A549 (cell line): ENCODE measurements at regions of chr17 and their contacts with region 1.

Region 1: DNA sequence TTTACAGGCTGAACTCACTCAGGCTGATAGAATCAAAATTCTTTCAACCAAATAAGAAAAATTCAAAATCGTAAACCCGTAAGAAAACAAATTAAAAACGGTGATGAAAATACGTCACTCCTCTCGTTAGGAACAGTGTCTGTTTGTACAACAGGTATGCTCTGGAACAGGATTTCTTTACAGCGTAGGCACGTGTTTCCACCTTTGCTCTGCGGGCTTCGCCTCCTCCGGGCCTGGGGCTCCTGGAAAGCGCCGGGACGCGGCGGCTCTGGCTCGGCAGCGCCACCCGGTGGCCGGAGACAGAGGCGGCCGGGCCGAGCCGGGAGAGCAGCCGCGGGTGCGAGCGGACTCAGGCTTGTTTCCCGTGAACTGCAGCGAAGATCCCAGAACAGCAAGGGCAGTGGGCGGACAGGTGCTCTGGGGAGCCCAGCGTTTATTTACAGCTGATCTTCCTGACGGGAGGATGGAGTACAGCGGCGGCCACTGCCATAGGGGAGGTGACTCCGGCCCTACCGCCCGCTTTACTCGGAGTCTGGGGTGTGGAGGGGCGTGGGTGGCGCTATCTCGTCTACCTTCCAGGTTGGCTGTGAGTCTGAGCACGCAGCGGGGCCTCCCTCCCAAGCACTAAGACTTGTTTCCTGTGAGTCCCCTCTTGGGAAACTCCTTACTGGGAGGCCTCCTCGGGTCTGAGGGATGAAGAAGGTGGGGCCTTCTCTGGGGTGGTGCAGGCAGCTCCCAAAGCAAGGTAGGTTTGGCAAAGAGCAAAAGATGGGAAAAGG is 40.5 kb upstream of the ATP2A3 start:
- DNase-seq: peak; percentile 56 to 81
- ATAC-seq: peak; percentile 64 to 85; a peak in 5 of 6 replicates
- H3K4me3 ChIP-seq: no peak overlapping the region
- H3K27ac ChIP-seq: no peak overlapping the region
- H3K4me1 ChIP-seq: peaks cover 23% of the 10 kb centered on the region
- CTCF ChIP-seq: peak; percentile 95
- EP300 ChIP-seq: no peak
- POLR2A ChIP-seq: no peak
- RAD21 ChIP-seq: peak; percentile 89

Region 2: GRCh38 chr17:3865176-3865575 is 139.5 kb before region 1 on chr17:
- CTCF ChIA-PET with region 1: interaction called, 35 read pairs
- POLR2A ChIA-PET with region 1: no interaction called
- DNase-seq: no peak
- ATAC-seq: peak; percentile 42 to 57
- H3K4me3 ChIP-seq: no peak overlapping the region
- H3K27ac ChIP-seq: peak overlapping the region in 1 of 2 experiments; percentile 36; a peak in 3 of 6 replicates
- H3K4me1 ChIP-seq: peaks cover 9% of the 10 kb centered on the region; the same call in 2 of the 3 replicates
- CTCF ChIP-seq: no peak
- EP300 ChIP-seq: no peak
- POLR2A ChIP-seq: no peak
- RAD21 ChIP-seq: no peak

Region 3: DNA sequence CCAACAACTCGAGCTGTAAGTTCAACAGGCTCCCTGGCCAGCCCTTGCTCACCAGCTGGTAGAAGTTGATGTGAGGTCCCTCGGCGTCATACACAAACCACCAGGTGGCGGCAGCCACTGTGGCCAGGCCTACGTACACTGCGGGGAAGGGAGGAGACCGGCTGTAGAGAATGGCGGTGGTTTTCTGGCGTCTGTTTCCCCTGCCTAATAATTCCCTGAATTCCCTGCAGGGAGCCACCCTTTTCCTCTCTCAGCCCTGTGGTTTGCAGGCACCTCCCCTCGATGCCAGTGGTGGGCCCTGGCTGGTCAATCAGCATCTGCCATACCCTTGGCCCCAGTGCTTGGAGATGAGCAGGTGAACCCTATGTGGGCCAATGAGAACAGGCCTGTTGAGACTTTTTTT is 69.6 kb before region 1 on chr17:
- CTCF ChIA-PET with region 1: interaction called, 84 read pairs
- POLR2A ChIA-PET with region 1: no interaction called
- DNase-seq: peak; percentile 84 to 87
- ATAC-seq: peak; percentile 96 to 98
- H3K4me3 ChIP-seq: no peak overlapping the region
- H3K27ac ChIP-seq: no peak overlapping the region
- H3K4me1 ChIP-seq: no peaks in the 10 kb centered on the region; the same call in 2 of the 3 replicates
- CTCF ChIP-seq: peak; percentile 70
- EP300 ChIP-seq: no peak
- POLR2A ChIP-seq: no peak
- RAD21 ChIP-seq: peak; percentile 79 to 90

Region 4: DNA sequence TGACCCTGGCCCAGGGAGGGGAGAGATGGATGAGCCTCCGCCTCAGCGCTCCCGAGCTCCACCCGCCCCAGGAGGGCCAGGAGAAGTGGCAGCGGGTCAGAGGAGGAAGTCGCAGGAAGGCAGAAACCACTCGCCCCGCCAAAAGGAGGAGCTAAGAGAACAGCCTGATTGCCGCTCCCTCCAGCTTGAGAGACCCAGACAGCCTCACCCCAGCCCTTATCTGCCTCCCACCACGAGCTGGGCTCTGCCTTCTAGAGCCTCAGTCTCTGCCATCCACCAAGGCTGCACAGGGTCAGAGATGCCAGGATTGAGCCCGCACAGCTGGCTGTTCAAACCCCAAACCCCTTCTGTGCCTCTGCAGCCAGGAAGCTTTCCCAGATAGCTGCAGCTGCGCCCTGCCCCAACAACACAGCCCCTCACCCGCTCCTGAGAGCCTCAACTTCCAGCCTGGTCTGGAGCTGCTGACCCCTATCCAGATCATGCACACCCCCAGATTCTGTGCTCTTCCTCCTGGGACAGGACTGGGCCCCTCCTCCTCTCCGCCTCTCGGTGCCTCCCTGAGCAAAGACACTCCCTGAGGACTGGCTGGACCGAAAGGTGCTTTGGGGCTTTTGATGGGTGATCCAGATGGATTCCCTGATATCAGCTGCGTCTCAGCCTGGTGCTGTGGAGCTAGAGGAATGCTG is 39.4 kb before region 1 on chr17:
- CTCF ChIA-PET with region 1: interaction called, 32 read pairs
- POLR2A ChIA-PET with region 1: interaction called, 7 read pairs
- DNase-seq: peak; percentile 83 to 92
- ATAC-seq: peak; percentile 86 to 94
- H3K4me3 ChIP-seq: peak overlapping the region; percentile 55
- H3K27ac ChIP-seq: peak overlapping the region; percentile 74 to 86
- H3K4me1 ChIP-seq: peaks cover 24% of the 10 kb centered on the region
- CTCF ChIP-seq: no peak
- EP300 ChIP-seq: no peak
- POLR2A ChIP-seq: peak; percentile 64
- RAD21 ChIP-seq: peak; percentile 40 to 45; a peak in 3 of 5 replicates

Region 5: DNA sequence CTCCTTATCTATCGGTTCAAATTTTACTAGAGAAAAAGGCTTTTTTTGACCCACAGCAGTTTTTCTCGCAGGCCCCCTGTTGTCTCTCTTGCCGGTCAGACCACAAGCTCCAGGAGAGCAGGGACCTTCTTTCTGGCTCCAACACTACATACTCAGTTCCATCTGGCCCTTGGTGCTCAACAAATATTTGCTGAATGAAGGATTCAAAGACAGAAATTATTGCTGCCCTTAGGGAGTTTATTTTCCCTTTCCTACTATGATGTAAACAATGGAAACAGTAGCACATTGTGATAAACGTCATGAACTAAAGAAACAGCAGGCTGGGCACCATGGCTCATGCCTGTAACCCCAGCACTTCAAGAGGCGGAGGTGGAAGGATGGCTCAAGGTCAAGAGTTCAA is 18.5 kb after region 1 on chr17:
- CTCF ChIA-PET with region 1: interaction called, 55 read pairs
- POLR2A ChIA-PET with region 1: interaction called, 3 read pairs
- DNase-seq: no peak
- ATAC-seq: no peak
- H3K4me3 ChIP-seq: no peak overlapping the region
- H3K27ac ChIP-seq: no peak overlapping the region
- H3K4me1 ChIP-seq: no peaks in the 10 kb centered on the region
- CTCF ChIP-seq: no peak
- EP300 ChIP-seq: no peak
- POLR2A ChIP-seq: no peak
- RAD21 ChIP-seq: no peak

Region 6: GRCh38 chr17:4175921-4176807 is 171.5 kb after region 1 on chr17:
- CTCF ChIA-PET with region 1: no interaction called
- POLR2A ChIA-PET with region 1: no interaction called
- DNase-seq: no peak
- ATAC-seq: no peak
- H3K4me3 ChIP-seq: no peak overlapping the region
- H3K27ac ChIP-seq: no peak overlapping the region
- H3K4me1 ChIP-seq: no peaks in the 10 kb centered on the region
- CTCF ChIP-seq: no peak
- EP300 ChIP-seq: no peak
- POLR2A ChIP-seq: no peak
- RAD21 ChIP-seq: no peak